ENCODE measurements at regions of chr16 and their contacts with region 1.

Region 1: DNA sequence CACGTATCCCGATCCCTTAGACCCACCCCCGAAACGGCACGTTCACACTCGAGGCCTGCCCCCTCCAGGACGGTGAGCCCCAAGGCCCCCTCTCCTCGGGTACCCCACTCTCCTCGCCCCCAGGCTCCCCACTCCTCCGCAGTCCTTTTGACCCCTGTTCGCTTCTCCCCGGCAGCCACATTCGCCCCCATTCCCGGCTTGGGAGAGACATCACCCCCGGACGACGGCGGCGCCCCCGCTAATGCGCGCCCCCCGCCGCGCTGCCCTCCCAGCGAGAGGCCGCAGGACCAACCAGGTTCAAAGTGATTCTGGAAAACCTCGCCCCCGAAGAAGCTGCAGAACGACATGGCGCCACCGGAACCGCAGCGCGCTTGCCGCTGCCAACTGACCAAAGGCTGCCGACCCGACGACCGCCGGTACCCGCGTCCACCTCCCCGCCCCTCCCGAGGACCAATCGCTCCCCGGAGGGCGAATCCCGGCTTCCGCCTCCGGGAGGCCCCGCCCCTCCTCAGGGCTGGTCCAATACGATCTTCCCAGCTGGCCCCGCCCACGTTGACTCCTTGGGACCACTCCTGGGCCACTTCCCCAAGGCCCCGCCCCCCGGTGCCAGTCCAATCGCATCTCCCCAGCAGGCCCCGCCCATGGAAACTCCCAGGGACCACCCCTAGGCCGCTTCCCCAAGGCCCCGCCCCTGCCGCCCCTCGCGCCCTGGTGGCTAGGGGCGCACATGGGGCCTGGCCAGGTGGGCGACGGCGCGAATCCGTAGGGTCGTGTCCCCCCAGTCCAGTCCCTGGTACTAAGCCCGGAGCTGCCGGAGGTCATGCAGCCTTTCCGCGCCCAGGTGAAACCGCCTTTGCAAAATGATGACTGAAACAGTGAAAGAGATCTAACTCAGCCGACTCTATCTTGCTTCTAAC is at the start of gene MSRB1:
- DNase-seq: peak; percentile 99
- H3K4me3 ChIP-seq: peak within 1 kb of the TSS; percentile 53 to 89 (median 62)
- H3K27ac ChIP-seq: no peak within 1 kb of the TSS
- H3K4me1 ChIP-seq: peaks cover 12% of the 10 kb centered on the region
- H3K27me3 ChIP-seq: no peaks in the 10 kb centered on the region
- CTCF ChIP-seq: peak in 1 of 2 donors; percentile 3
- POLR2A ChIP-seq: peak; percentile 91
- total RNA-seq, gene MSRB1: 20.7 and 25.0 TPM in 2 replicates

Region 2: GRCh38 chr16:1929578-1930337 is 13.3 kb before region 1 on chr16:
- CTCF ChIA-PET with region 1: interaction called, 4 read pairs
- POLR2A ChIA-PET with region 1: no interaction called
- dilution Hi-C with region 1: no loop called
- intact Hi-C with region 1: loop called (anchors 2 kb)
- DNase-seq: peak; percentile 79
- H3K4me3 ChIP-seq: peak overlapping the region in 2 of 3 experiments; percentile 50 to 53
- H3K27ac ChIP-seq: no peak overlapping the region
- H3K4me1 ChIP-seq: no peaks in the 10 kb centered on the region
- H3K27me3 ChIP-seq: no peaks in the 10 kb centered on the region
- CTCF ChIP-seq: peak; percentile 80 to 98
- POLR2A ChIP-seq: no peak

Region 3: GRCh38 chr16:1959269-1960049 is 16.4 kb after region 1 on chr16 and contains the start of gene NDUFB10:
- CTCF ChIA-PET with region 1: interaction called, 5 read pairs
- POLR2A ChIA-PET with region 1: interaction called, 11 read pairs
- dilution Hi-C with region 1: no loop called
- intact Hi-C with region 1: loop called (anchors 1 kb)
- DNase-seq: peak; percentile 88
- H3K4me3 ChIP-seq: peak within 1 kb of the TSS; percentile 63 to 76 (median 72)
- H3K27ac ChIP-seq: peak within 1 kb of the TSS; percentile 6
- H3K4me1 ChIP-seq: peaks cover 19% of the 10 kb centered on the region
- H3K27me3 ChIP-seq: no peaks in the 10 kb centered on the region
- CTCF ChIP-seq: peak; percentile 82 to 87
- POLR2A ChIP-seq: peak; percentile 95
- total RNA-seq, gene NDUFB10: 124 and 144 TPM in 2 replicates

Region 4: GRCh38 chr16:1964506-1965395 is 21.7 kb after region 1 on chr16 and contains the start of gene RPS2:
- CTCF ChIA-PET with region 1: interaction called, 4 read pairs
- POLR2A ChIA-PET with region 1: interaction called, 11 read pairs
- dilution Hi-C with region 1: no loop called
- intact Hi-C with region 1: loop called (anchors 1 kb)
- DNase-seq: peak; percentile 99
- H3K4me3 ChIP-seq: peak within 1 kb of the TSS; percentile 85 to 95 (median 89)
- H3K27ac ChIP-seq: peak within 1 kb of the TSS; percentile 76
- H3K4me1 ChIP-seq: peaks cover 27% of the 10 kb centered on the region
- H3K27me3 ChIP-seq: no peaks in the 10 kb centered on the region
- CTCF ChIP-seq: no peak
- POLR2A ChIP-seq: peak; percentile 100
- total RNA-seq, gene RPS2: 2,793 and 3,036 TPM in 2 replicates

Measured in endothelial cell of umbilical vein (primary cell).